ENCODE measurements at regions of chr20 and their contacts with region 1.

Region 1: GRCh38 chr20:18466894-18467730 is at the starts of genes DZANK1 and POLR3F:
- DNase-seq: peak; percentile 93
- H3K4me3 ChIP-seq: peak within 1 kb of the TSS; percentile 86
- H3K27ac ChIP-seq: peak within 1 kb of the TSS; percentile 3
- H3K4me1 ChIP-seq: peaks cover 17% of the 10 kb centered on the region
- CTCF ChIP-seq: no peak
- total RNA-seq, gene DZANK1: 7.9 and 9.1 TPM in 2 replicates
- total RNA-seq, gene POLR3F: 12.0 and 14.9 TPM in 2 replicates

Region 2: DNA sequence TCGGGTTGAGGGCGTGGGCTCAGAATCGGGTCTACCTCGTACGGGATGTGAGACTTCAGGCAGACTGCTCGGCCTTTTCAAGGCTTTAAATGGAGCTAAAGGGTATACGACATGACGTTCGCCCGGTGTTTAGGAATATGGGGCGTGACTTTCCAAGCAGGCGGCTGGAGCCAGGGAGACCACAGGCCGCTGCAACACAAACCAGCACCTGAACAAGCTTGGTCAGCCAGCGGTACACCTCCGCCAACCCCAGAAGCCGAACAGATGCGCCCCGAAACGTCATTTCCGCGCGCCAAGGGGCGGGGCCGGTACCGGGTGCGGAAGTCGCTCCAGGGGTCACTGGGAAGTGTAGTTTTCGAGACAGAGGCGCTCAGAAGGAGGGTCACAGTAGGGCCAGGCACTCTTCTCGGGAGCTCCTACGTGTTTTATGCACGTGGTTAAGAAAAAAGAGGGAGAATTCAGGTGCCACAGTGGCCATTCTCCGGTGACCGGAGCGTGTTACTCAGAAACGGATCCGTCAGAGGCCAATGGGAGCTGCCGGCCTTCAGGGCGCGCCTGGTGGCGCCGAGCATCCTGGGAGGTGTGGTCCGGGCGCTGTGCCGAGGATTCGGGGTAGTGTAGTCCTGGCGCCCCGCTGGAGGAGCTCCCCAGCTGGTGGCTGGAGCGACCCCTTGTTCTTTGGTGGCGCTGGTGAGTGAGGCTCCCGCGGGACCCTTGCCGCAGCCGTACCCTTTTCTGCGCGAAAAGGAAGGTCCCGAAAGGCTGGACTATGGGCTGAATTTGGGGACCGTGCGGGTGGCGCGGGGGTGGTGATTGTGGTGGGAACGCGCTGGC is 179.0 kb before region 1 on chr20 and contains the start of gene ZNF133:
- CTCF ChIA-PET with region 1: no interaction called
- POLR2A ChIA-PET with region 1: no interaction called
- intact Hi-C with region 1: loop called (anchors 10 kb)
- DNase-seq: peak; percentile 93
- H3K4me3 ChIP-seq: peak within 1 kb of the TSS; percentile 90
- H3K27ac ChIP-seq: peak within 1 kb of the TSS; percentile 52
- H3K4me1 ChIP-seq: peaks cover 17% of the 10 kb centered on the region
- CTCF ChIP-seq: peak; percentile 58; the same call in 1 of the 2 replicates
- total RNA-seq, gene ZNF133: 5.9 and 11.1 TPM in 2 replicates

Region 3: DNA sequence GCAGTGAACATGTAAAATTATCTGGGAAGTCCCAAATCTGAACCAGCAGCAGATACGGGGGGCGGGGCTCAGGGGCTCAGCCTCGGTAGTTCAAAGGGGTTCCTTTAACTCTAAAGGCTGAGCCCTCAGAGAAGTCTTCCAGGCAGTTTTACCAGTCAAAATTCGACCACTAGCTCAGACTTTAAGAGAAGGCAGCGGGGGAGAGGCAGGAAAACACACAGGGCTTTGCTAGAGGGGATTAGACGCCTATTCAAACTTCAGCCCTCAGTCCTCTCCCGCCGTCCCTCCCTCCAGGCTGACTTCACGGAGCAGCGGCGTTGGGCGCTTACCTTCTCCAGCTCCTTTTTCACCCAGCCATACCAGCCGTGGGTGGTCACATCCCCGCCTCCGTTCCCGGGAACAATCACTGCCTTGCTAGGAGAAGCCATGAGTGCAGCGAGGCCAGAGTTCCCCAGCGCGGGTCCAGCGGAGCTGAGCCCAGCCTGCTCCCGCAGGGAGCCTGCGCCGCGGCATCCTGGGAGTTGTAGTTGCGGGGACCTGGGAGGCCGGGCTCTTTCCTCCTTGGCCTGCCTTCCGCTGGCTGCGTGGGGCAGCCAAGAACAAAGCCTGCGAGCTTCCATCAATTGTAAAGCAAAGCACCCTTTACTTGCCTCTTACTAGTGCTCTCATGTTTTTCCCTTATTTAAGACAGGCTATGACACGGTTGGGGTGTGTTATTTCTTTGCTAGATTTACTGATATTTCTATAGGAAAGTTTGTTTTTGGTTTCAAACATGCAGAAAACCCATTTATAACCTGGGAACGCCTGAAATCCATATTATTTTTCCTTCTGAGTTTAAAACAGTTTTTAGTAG is 29.9 kb after region 1 on chr20 and contains the start of gene RBBP9:
- CTCF ChIA-PET with region 1: no interaction called
- POLR2A ChIA-PET with region 1: interaction called, 14 read pairs
- intact Hi-C with region 1: loop called (anchors 1 kb)
- DNase-seq: peak; percentile 84
- H3K4me3 ChIP-seq: peak within 1 kb of the TSS; percentile 95
- H3K27ac ChIP-seq: peak within 1 kb of the TSS; percentile 25
- H3K4me1 ChIP-seq: peaks cover 14% of the 10 kb centered on the region
- CTCF ChIP-seq: no peak
- total RNA-seq, gene RBBP9: 8.1 and 8.7 TPM in 2 replicates

Region 4: GRCh38 chr20:18566892-18567742 is 100.0 kb after region 1 on chr20 and contains the start of gene SMIM26:
- CTCF ChIA-PET with region 1: no interaction called
- POLR2A ChIA-PET with region 1: no interaction called
- intact Hi-C with region 1: loop called (anchors 2 kb)
- DNase-seq: peak; percentile 97
- H3K4me3 ChIP-seq: peak within 1 kb of the TSS; percentile 83
- H3K27ac ChIP-seq: peak within 1 kb of the TSS; percentile 51
- H3K4me1 ChIP-seq: peaks cover 16% of the 10 kb centered on the region
- CTCF ChIP-seq: no peak
- total RNA-seq, gene SMIM26: 124 and 161 TPM in 2 replicates